Heart right ventricle (tissue), 16 donors: ENCODE measurements at regions of chr9 and their contacts with region 1.

Region 1: DNA sequence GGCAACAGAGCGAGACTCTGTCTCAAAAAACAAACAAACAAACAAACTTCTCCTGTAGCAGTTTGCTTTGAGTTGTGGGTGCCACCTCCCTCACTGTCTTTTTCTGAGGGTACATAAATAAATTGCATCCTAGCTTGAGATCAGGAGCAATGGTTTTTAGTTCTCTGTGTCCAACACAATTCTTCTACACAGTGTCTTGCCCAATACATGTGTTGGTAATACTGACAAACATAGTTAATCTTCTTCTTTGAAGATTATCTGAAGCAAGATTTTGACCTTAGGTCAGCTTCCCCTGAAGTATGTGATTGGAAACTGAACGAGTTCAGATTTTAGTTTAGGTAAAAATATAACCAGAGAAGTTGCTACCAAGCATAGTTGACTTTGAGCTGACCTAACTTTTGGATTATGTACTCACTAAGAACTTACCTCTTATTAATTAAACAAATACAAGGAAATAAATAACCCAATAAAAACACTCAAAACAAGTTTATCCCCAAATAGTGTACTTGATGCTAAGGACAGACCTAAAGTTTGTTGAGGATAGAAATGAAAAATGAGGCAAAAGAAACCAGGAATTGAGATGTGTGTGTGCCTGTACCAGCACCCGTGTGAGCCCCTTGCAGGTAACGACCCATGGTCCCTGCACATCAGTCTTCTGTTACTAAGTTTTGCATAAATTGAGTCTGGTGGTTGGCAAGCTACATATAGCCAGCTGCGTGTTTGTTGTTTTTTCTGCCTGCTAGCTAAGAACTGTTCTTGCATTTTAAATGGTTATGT is 16.2 kb downstream of the TJP2 start:
- DNase-seq: no peak
- ATAC-seq: no peak
- H3K4me3 ChIP-seq: no peak overlapping the region
- H3K27ac ChIP-seq: peak overlapping the region in 5 of 10 donors; percentile 25 to 51 (median 28)
- H3K4me1 ChIP-seq: peaks cover 5 to 96% (median 65%) of the 10 kb centered on the region in 9 donors
- H3K27me3 ChIP-seq: no peaks in the 10 kb centered on the region
- CTCF ChIP-seq: no peak

Region 2: GRCh38 chr9:68690088-68690487 is 500.2 kb before region 1 on chr9:
- intact Hi-C with region 1: no loop called
- DNase-seq: peak; percentile 33 to 47
- ATAC-seq: peak; percentile 80 to 97 (median 92)
- H3K4me3 ChIP-seq: no peak overlapping the region
- H3K27ac ChIP-seq: peak overlapping the region in 7 of 10 donors; percentile 13 to 66 (median 48)
- H3K4me1 ChIP-seq: peaks cover 0 to 29% (median 10%) of the 10 kb centered on the region in 9 donors
- H3K27me3 ChIP-seq: peaks cover 0 to 4% (median 0%) of the 10 kb centered on the region in 7 donors
- CTCF ChIP-seq: no peak

Region 3: GRCh38 chr9:69035438-69036308 is 154.6 kb before region 1 on chr9 and contains the start of gene FXN:
- intact Hi-C with region 1: loop called in 2 of 10 experiments (anchors 1 to 5 kb)
- DNase-seq: peak; percentile 83 to 87
- ATAC-seq: peak; percentile 91 to 97 (median 95)
- H3K4me3 ChIP-seq: peak within 1 kb of the TSS; percentile 54 to 81 (median 72)
- H3K27ac ChIP-seq: peak within 1 kb of the TSS; percentile 34 to 89 (median 86)
- H3K4me1 ChIP-seq: peaks cover 0 to 22% (median 11%) of the 10 kb centered on the region in 9 donors
- H3K27me3 ChIP-seq: no peaks in the 10 kb centered on the region
- CTCF ChIP-seq: peak; percentile 98 to 100 (median 99)
- total RNA-seq, gene FXN: 18.8 to 41.8 (median 36.8) TPM

Region 4: DNA sequence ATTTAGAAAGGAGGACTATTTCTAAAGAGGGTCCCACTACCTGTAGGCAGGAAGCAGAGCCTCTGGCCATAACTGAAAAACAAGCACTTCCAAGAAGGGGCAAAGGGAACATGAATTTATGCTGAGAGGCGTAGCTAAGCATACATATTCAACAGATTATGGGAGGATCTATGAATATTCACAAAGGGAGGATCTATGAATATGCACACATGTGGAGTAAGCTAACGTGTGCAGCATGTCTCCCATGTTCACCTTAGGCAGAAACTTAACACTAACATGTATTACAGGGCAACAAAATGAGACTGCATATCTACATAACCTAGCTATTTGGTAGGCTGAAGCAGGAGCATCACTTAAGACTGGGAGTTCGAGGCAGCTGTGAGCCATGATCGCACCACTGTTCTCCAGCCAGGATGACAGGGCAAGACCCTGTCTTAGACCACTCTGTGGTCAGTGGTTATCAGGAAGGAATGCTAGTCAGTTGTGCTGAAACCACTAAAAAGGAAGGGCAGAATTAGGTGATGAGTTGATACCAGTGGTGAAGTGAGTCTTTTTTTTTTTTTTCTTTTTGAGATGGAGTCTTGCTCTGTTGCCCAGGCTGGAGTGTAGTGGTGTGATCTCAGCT is 134.0 kb before region 1 on chr9:
- intact Hi-C with region 1: loop called (anchors 1 to 5 kb)
- DNase-seq: no peak
- ATAC-seq: no peak
- H3K4me3 ChIP-seq: no peak overlapping the region
- H3K27ac ChIP-seq: no peak overlapping the region
- H3K4me1 ChIP-seq: peaks cover 0 to 7% (median 0%) of the 10 kb centered on the region in 9 donors
- H3K27me3 ChIP-seq: no peaks in the 10 kb centered on the region
- CTCF ChIP-seq: no peak

Region 5: GRCh38 chr9:69121828-69122548 is 68.3 kb before region 1 on chr9:
- intact Hi-C with region 1: loop called in 5 of 10 experiments (anchors 1 to 10 kb)
- DNase-seq: peak; percentile 73 to 75
- ATAC-seq: peak; percentile 80 to 89 (median 87)
- H3K4me3 ChIP-seq: peak overlapping the region; percentile 65 to 91 (median 86)
- H3K27ac ChIP-seq: peak overlapping the region; percentile 55 to 96 (median 90)
- H3K4me1 ChIP-seq: peaks cover 4 to 20% (median 14%) of the 10 kb centered on the region in 9 donors
- H3K27me3 ChIP-seq: no peaks in the 10 kb centered on the region
- CTCF ChIP-seq: peak in 4 of 9 donors; percentile 0 to 27 (median 22)

Region 6: DNA sequence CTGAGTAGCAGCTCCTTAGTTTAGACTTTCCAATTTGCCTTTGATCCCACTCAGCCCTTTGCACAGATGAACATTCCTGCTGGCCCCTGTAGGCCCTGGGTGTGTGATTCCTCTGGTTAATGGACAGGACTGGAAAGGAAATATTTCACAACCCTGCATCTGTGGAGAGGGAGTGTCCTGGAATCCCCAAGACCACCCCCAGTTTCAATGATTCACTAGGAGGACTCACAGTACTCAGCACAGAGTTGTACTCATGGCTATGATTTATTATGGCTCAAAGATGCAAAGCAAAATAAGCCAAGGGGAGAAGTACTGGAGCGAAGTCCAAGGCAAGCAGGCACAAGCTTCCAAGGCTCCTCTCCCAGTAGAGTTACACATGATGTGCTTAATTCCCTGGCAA is 58.6 kb before region 1 on chr9:
- intact Hi-C with region 1: loop called in 1 of 10 experiments (anchors 5 kb)
- DNase-seq: peak in 1 of 2 donors; percentile 3
- ATAC-seq: peak; percentile 28 to 79 (median 40)
- H3K4me3 ChIP-seq: no peak overlapping the region
- H3K27ac ChIP-seq: peak overlapping the region in 9 of 10 donors; percentile 39 to 88 (median 76)
- H3K4me1 ChIP-seq: peaks cover 11 to 68% (median 35%) of the 10 kb centered on the region in 9 donors
- H3K27me3 ChIP-seq: no peaks in the 10 kb centered on the region
- CTCF ChIP-seq: no peak

Region 7: DNA sequence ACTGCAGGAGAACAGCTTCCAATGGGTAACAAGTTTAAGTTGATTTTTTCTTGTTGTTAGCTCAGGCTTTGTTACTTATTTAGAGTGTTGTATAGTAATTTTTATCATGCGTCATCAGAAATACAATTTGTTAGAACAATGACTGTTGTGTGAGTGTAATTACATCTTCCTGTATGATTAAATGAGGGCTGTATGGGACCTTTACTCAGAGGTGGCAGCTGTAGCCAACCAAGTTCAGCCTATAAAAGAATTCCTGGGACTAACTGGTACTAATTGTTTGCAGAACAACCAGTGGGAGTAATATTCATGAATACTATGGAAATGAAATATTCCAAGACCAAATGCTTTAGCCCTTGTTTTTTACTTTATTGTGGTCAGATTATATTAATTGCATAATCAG is 47.0 kb before region 1 on chr9:
- intact Hi-C with region 1: loop called in 2 of 10 experiments (anchors 5 kb)
- DNase-seq: peak in 1 of 2 donors; percentile 2
- ATAC-seq: peak in 4 of 8 donors; percentile 13 to 47 (median 34)
- H3K4me3 ChIP-seq: no peak overlapping the region
- H3K27ac ChIP-seq: peak overlapping the region in 4 of 10 donors; percentile 10 to 73 (median 40)
- H3K4me1 ChIP-seq: peaks cover 0 to 51% (median 24%) of the 10 kb centered on the region in 9 donors
- H3K27me3 ChIP-seq: no peaks in the 10 kb centered on the region
- CTCF ChIP-seq: no peak

Region 8: DNA sequence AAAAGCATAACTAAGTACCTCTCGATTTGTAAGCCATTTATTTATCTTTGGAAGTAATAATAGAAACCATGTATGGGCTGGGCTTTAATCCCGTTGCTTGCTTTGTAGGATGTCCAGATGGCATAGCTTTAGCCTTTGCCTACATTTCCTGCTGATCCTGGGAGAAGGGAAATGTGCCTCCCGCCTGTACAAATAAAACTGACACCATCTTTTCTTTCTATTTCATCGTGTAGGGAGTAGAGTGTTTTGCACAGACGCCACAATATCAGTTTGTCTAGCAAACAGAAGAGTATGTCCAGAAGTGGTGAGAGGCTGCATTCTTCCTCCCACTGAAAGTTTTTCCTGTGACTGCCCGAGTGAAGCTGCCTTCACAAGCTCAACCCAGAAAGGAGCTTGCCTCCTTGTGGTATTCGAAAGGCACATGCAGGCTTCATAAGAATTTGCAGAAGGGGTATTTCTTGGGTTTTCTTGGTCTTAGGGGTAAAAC is 40.9 kb before region 1 on chr9:
- intact Hi-C with region 1: loop called in 2 of 10 experiments (anchors 5 kb)
- DNase-seq: peak in 1 of 2 donors; percentile 28
- ATAC-seq: peak in 7 of 8 donors; percentile 34 to 77 (median 65)
- H3K4me3 ChIP-seq: peak overlapping the region in 2 of 10 donors; percentile 7 to 9
- H3K27ac ChIP-seq: peak overlapping the region in 9 of 10 donors; percentile 0 to 73 (median 60)
- H3K4me1 ChIP-seq: peaks cover 4 to 29% (median 14%) of the 10 kb centered on the region in 9 donors
- H3K27me3 ChIP-seq: no peaks in the 10 kb centered on the region
- CTCF ChIP-seq: peak in 7 of 9 donors; percentile 14 to 60 (median 34)

Region 9: DNA sequence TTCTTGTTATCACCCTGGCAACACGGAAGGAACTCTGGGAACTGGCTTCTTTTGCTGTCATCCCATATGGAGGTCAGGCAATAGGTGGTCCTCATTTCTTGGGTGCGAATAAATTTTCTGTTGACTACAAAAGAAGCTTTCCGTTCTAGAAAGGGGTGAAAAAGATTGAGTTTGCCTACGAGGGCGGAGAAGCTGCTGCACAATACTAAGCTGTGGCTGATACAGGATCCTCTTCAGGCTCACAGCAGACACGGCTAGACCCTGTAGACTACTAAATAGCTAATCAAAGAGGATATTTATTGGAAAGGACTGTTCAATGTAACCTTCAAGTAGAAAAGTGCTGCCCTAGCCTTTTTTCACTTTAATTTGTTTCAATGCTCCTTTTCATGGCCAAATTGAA is 41.9 kb after region 1 on chr9:
- intact Hi-C with region 1: no loop called
- DNase-seq: no peak
- ATAC-seq: peak in 3 of 8 donors; percentile 18 to 49 (median 32)
- H3K4me3 ChIP-seq: no peak overlapping the region
- H3K27ac ChIP-seq: peak overlapping the region in 3 of 10 donors; percentile 35 to 37 (median 37)
- H3K4me1 ChIP-seq: peaks cover 0 to 20% (median 0%) of the 10 kb centered on the region in 9 donors
- H3K27me3 ChIP-seq: no peaks in the 10 kb centered on the region
- CTCF ChIP-seq: no peak

Region 10: GRCh38 chr9:70466976-70467561 is 1276.8 kb after region 1 on chr9:
- intact Hi-C with region 1: no loop called
- DNase-seq: no peak
- ATAC-seq: peak in 2 of 8 donors; percentile 1 to 53
- H3K4me3 ChIP-seq: no peak overlapping the region
- H3K27ac ChIP-seq: peak overlapping the region in 3 of 10 donors; percentile 45 to 75 (median 65)
- H3K4me1 ChIP-seq: peaks cover 14 to 57% (median 36%) of the 10 kb centered on the region in 9 donors
- H3K27me3 ChIP-seq: no peaks in the 10 kb centered on the region
- CTCF ChIP-seq: peak in 1 of 9 donors; percentile 14